IMR-90 (cell line): ENCODE measurements at regions of chr1 and their contacts with region 1.

Region 1: DNA sequence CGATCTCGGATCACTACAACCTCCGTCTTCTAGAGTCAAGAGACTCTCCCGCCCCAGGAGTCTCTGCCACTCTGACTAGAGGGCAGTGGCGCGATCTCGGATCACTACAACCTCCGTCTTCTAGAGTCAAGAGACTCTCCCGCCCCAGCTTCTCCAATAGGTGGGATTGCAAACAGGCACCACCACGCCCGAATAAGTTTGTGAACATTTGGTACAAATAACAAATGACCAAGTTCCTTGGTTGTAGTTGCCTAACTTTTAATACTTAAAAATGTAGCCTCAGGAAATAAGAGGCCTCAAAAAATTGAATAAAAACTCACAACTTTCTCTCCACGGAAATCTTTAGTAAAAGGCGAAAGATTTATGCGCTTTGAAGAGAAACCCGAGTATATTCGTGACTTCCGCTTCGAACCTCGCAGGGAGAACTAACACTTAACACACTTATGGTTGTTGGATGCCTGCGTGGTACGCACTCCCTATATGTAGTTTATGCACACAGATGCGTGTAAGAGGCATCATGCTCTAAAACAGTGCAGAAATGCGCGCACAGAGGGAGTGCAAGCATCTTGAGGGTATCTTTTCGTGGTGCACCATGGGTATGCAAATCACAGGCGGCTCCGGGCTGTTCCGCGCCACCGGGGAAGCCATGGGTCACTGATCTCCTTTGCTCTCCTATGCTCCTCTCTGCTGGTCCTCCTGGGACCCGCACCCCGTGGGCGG is 11.4 kb downstream of the BTBD19 start:
- DNase-seq: peak; percentile 95
- ATAC-seq: peak; percentile 84
- H3K4me3 ChIP-seq: peak overlapping the region; percentile 42
- H3K27ac ChIP-seq: peak overlapping the region; percentile 99
- H3K4me1 ChIP-seq: peaks cover 5% of the 10 kb centered on the region
- H3K27me3 ChIP-seq: no peaks in the 10 kb centered on the region
- CTCF ChIP-seq: peak; percentile 8; the same call in 1 of the 2 replicates
- POLR2A ChIP-seq: peak; percentile 100
- RAD21 ChIP-seq: peak; percentile 16; the same call in 1 of the 2 replicates

Region 2: DNA sequence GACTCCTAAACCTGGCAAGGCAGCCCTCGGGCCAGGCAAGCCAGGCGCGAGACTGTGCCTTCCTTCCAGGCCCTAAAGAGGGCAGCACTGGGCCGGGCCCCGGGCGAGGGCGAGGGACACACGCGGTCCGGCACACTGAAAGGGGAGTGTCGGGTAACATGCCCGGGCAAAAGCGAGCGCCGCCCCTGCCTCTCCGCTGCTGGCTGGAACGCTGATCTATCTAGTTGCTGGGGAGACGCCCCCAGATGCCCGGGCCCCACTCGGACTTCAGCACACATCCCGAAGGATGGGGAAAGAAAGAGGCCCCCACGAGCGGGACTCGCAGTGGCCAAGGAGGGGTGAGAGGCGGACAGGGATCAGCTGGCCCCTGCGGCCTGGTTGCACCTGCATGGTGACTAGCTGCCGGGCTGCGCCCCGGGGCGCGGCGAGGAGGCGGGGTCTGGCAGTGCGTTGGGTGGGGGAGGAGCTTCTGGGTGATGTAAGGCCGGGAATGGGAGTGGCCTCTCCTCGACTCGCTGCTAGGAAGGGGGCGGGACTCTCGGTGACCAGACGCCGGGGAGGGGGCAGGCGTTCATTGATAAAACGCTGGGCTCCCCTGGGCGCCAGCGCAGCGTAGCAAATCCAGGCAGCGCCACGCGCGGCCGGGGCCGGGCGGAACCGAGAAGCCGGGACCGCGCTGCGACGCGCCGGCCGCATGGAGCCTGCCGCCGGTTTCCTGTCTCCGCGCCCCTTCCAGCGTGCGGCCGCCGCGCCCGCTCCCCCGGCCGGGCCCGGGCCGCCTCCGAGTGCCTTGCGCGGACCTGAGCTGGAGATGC is 19.8 kb before region 1 on chr1 and contains the start of gene PLK3:
- CTCF ChIA-PET with region 1: interaction called, 8 read pairs
- POLR2A ChIA-PET with region 1: interaction called, 13 read pairs
- dilution Hi-C with region 1: no loop called
- in situ Hi-C with region 1: no loop called
- intact Hi-C with region 1: loop called (anchors 2 kb)
- DNase-seq: peak; percentile 98
- ATAC-seq: peak; percentile 92
- H3K4me3 ChIP-seq: peak within 1 kb of the TSS; percentile 74
- H3K27ac ChIP-seq: peak within 1 kb of the TSS; percentile 83
- H3K4me1 ChIP-seq: peaks cover 11% of the 10 kb centered on the region
- H3K27me3 ChIP-seq: no peaks in the 10 kb centered on the region
- CTCF ChIP-seq: peak; percentile 96
- POLR2A ChIP-seq: peak; percentile 99
- RAD21 ChIP-seq: peak; percentile 84
- total RNA-seq, gene PLK3: 15.3 and 15.8 TPM in 2 replicates

Region 3: DNA sequence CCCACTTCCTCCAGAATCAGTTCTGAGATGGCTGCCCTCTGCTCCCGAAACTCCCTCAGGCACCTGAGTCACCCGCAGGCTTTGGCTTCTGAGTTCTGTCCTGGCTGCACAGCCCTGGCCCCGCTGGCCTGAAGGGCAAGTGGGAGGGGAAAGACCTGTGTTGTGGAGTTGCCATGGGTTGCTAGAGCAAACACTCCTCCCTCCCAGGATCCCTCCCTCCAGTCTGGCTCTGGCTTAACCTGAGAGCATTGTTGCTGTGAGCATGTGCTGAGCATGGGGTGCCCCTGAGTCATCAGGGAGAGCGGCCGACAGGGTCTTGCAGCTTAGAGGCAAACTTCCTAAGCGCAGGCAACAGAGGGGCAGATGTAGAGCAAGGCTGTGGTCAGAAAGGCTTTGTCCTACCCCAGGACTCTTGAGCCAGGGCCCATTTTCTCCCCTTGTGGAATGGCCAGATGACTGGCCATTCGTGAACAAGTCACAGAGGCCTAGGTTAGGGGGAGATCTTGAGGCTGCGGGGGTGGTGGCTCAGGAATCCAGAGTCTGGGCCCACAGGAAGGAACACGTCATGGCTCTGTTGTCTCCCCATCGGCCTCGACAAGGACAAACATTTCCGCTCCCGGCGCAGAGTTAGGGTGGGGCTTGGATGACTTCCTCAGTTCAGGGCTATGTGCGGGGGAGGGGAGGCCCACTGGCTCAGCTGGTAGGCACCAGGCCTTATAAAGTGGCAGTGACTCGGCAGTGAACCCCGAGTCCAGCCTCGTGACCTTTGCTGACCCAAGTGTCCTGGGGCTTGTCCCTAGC is 12.3 kb before region 1 on chr1 and contains the start of gene DYNLT4:
- CTCF ChIA-PET with region 1: interaction called, 6 read pairs
- POLR2A ChIA-PET with region 1: interaction called, 30 read pairs
- dilution Hi-C with region 1: no loop called
- in situ Hi-C with region 1: no loop called
- intact Hi-C with region 1: no loop called
- DNase-seq: peak; percentile 99
- ATAC-seq: peak; percentile 73
- H3K4me3 ChIP-seq: no peak within 1 kb of the TSS
- H3K27ac ChIP-seq: peak within 1 kb of the TSS; percentile 86
- H3K4me1 ChIP-seq: peaks cover 51% of the 10 kb centered on the region
- H3K27me3 ChIP-seq: no peaks in the 10 kb centered on the region
- CTCF ChIP-seq: no peak
- POLR2A ChIP-seq: peak; percentile 78
- RAD21 ChIP-seq: no peak
- total RNA-seq, gene DYNLT4: 0.56 TPM in 1 of 2 replicates, not detected in the other